ENCODE measurements at regions of chr17 and their contacts with region 1.

Region 1: DNA sequence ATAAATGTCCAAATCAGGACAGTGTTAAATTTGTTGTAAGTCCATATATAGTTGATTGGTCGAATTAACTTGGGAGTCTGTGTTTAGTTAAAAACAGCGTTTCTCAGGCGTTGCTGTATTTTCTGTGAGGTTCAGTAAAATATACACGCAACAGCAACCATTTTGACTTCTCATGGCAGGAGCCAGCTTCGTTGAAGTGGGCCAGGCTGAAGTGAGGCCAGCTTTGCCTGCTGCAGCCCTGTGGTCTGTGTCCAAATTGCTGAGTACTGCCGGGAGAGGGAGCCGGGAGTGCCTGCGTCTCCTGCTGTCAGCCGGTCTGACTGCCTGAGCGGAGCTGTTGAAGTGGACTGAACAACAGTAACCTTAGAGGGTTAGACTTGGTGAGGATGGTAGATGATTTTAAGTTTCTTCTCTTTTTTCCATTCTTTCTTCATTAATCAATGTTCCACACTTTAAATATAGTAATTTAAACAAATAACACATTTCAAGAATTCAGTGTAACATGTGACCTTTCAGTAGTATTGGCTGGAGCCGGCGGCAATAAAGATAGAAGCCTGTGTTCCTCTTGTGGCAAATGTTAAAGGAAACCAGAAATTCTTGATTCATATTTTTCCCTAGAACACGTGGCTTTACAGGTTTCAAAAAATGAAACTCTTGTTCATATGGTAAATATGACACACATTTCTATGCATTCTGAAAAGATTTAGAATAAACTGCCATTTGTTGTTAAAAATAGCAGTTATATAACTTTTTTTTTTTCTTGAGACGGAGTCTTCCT is 37.0 kb upstream of the ZNF750 start:
- DNase-seq: peak; percentile 80 to 83
- H3K4me3 ChIP-seq: no peak overlapping the region
- H3K4me3 Mint-ChIP-seq: peak overlapping the region; percentile 68
- H3K27ac Mint-ChIP-seq: peak overlapping the region; percentile 68
- H3K4me1 ChIP-seq: peaks cover 32% of the 10 kb centered on the region
- H3K4me1 Mint-ChIP-seq: peaks cover 52% of the 10 kb centered on the region
- H3K27me3 ChIP-seq: no peaks in the 10 kb centered on the region
- H3K27me3 Mint-ChIP-seq: no peaks in the 10 kb centered on the region
- CTCF ChIP-seq: peak in 1 of 2 experiments; percentile 67

Region 2: GRCh38 chr17:82781894-82782274 is 94.9 kb before region 1 on chr17:
- CTCF ChIA-PET with region 1: interaction called, 12 read pairs
- POLR2A ChIA-PET with region 1: no interaction called
- intact Hi-C with region 1: no loop called
- DNase-seq: peak; percentile 66 to 88
- H3K4me3 ChIP-seq: no peak overlapping the region
- H3K4me3 Mint-ChIP-seq: no peak overlapping the region
- H3K27ac Mint-ChIP-seq: no peak overlapping the region
- H3K4me1 ChIP-seq: no peaks in the 10 kb centered on the region
- H3K4me1 Mint-ChIP-seq: no peaks in the 10 kb centered on the region
- H3K27me3 ChIP-seq: no peaks in the 10 kb centered on the region
- H3K27me3 Mint-ChIP-seq: no peaks in the 10 kb centered on the region
- CTCF ChIP-seq: peak; percentile 93 to 98

Region 3: DNA sequence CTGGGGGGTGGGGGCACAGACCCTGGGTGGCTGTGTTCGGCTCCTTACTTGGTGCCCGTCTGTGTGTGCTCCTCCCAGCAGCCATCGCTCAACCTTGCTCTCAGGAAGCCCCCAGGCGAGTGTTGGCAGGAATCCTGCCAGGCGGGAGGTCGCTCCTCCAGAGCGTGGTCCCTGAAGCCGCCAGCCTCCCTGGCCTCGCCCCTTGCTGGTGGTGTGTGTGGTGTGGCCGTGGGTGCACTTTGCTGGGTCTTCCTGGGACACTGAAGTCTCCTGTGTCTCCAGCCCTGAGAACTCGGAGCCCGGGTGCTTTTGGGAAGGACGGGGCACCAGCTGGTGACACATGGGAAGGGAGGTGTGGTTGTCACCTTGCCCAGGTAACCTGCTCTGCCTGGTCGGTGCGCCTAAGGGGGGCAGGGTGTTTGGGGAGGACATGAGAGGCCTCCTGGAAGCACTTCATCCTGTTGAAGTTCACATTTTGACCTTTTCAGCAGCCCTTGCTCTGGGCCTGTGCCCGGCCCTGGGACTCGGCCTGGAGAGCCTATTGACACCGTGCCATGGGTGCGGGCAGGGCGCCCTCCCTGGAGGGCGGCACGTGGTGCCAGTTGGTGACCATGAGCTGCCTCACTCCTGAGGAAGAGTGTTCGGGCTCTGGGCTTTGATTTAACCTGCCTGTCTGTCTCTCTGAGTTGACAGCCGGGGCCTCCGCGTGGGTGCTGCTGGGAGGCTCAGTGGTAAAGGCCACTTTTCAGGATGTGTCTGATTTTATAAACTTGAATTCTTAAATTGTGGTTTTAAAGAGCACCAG is 12.1 kb after region 1 on chr17:
- CTCF ChIA-PET with region 1: interaction called, 5 read pairs
- POLR2A ChIA-PET with region 1: interaction called, 3 read pairs
- intact Hi-C with region 1: loop called (anchors 1 kb)
- DNase-seq: peak in 1 of 2 experiments; percentile 43
- H3K4me3 ChIP-seq: no peak overlapping the region
- H3K4me3 Mint-ChIP-seq: peak overlapping the region; percentile 58
- H3K27ac Mint-ChIP-seq: peak overlapping the region; percentile 94
- H3K4me1 ChIP-seq: peaks cover 50% of the 10 kb centered on the region
- H3K4me1 Mint-ChIP-seq: peaks cover 55% of the 10 kb centered on the region
- H3K27me3 ChIP-seq: no peaks in the 10 kb centered on the region
- H3K27me3 Mint-ChIP-seq: no peaks in the 10 kb centered on the region
- CTCF ChIP-seq: no peak

Region 4: GRCh38 chr17:82911822-82912221 is 35.0 kb after region 1 on chr17:
- CTCF ChIA-PET with region 1: interaction called, 38 read pairs
- POLR2A ChIA-PET with region 1: no interaction called
- intact Hi-C with region 1: loop called (anchors 1 kb)
- DNase-seq: no peak
- H3K4me3 ChIP-seq: no peak overlapping the region
- H3K4me3 Mint-ChIP-seq: no peak overlapping the region
- H3K27ac Mint-ChIP-seq: no peak overlapping the region
- H3K4me1 ChIP-seq: no peaks in the 10 kb centered on the region
- H3K4me1 Mint-ChIP-seq: no peaks in the 10 kb centered on the region
- H3K27me3 ChIP-seq: no peaks in the 10 kb centered on the region
- H3K27me3 Mint-ChIP-seq: no peaks in the 10 kb centered on the region
- CTCF ChIP-seq: no peak

Region 5: DNA sequence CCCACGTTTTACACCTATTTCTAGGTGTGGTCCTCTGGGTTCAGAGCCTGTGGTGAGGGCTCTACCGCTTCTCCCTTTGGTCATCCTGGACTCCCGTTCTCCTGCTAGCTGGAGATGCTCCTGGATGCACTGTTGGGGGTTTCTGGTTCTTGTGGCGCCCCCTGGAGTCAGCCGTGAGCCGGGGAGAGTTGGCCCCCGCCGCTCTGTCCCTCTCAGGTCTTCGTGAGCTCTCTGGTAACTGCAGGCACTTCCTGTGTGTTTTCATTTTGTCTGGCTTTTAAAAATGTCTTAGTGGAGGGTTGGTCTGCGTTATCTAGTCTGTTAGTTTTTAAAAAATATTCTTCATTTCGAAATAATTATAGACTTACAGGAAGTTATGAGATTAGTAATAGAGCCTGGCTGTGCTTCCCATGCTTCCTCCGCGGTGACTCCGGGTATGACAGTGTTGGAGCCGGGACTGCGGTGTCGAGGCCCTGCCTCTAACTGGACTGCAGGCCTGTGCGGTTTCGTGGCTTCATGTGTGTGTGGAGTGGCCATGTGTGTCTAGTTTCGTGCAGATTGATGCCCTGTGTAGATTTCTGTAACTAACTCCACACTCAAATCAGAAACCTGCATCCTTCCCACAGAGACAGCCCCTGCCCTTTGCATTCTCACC is 41.0 kb after region 1 on chr17:
- CTCF ChIA-PET with region 1: interaction called, 38 read pairs
- POLR2A ChIA-PET with region 1: no interaction called
- intact Hi-C with region 1: no loop called
- DNase-seq: peak in 1 of 2 experiments; percentile 55
- H3K4me3 ChIP-seq: no peak overlapping the region
- H3K4me3 Mint-ChIP-seq: no peak overlapping the region
- H3K27ac Mint-ChIP-seq: no peak overlapping the region
- H3K4me1 ChIP-seq: peaks cover 6% of the 10 kb centered on the region
- H3K4me1 Mint-ChIP-seq: no peaks in the 10 kb centered on the region
- H3K27me3 ChIP-seq: no peaks in the 10 kb centered on the region
- H3K27me3 Mint-ChIP-seq: no peaks in the 10 kb centered on the region
- CTCF ChIP-seq: peak; percentile 35 to 53

Region 6: DNA sequence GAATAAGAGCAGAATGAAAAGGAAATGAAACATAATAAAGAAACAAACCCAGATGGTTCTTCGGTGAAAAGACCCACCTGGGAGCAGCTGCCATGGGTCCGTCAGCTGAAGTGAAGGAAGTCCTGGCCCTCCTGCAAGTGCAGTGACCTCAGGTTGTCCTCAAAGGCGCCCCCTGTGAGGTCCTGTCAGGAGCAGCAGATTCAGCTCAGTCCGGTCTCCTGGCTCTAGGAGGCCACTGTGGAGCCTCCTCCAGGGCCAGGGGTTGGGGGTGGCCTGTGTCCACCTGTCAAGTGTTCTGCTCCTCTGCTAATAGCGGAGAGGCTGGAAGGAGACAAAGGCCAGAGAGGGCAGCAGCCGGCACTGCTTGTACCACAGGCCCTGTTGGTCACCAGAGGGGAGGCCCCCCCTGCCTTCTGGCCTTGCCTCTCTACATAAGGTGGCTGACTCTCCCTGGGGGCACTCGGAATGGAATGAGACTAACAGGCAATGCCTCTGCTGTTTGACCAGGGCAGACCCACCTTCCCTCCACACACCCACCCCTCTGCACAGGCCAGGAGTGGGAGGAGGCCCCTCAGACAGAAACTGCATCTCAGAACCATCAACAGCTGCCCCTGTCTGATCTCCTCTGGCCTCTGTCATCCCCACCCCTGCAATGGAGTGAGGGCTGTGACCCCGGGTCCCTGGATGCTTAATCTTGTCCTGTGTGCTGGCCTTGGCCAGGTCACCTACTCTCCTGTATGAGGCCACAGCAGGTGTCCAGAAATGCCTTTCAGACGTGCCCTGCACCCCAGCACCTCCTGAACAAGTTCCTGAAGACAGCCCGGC is 70.2 kb after region 1 on chr17:
- CTCF ChIA-PET with region 1: no interaction called
- POLR2A ChIA-PET with region 1: no interaction called
- intact Hi-C with region 1: no loop called
- DNase-seq: peak in 1 of 2 experiments; percentile 28
- H3K4me3 ChIP-seq: no peak overlapping the region
- H3K4me3 Mint-ChIP-seq: no peak overlapping the region
- H3K27ac Mint-ChIP-seq: no peak overlapping the region
- H3K4me1 ChIP-seq: no peaks in the 10 kb centered on the region
- H3K4me1 Mint-ChIP-seq: no peaks in the 10 kb centered on the region
- H3K27me3 ChIP-seq: no peaks in the 10 kb centered on the region
- H3K27me3 Mint-ChIP-seq: no peaks in the 10 kb centered on the region
- CTCF ChIP-seq: no peak

Measured in Caco-2 (cell line).